ENCODE measurements at regions of chr20 and their contacts with region 1.

Region 1: GRCh38 chr20:50592282-50593004 is 82.3 kb downstream of the PTPN1 start:
- DNase-seq: no peak
- H3K4me3 ChIP-seq: no peak overlapping the region
- H3K27ac ChIP-seq: no peak overlapping the region
- H3K4me1 ChIP-seq: no peaks in the 10 kb centered on the region
- H3K27me3 ChIP-seq: no peaks in the 10 kb centered on the region
- CTCF ChIP-seq: no peak

Region 2: DNA sequence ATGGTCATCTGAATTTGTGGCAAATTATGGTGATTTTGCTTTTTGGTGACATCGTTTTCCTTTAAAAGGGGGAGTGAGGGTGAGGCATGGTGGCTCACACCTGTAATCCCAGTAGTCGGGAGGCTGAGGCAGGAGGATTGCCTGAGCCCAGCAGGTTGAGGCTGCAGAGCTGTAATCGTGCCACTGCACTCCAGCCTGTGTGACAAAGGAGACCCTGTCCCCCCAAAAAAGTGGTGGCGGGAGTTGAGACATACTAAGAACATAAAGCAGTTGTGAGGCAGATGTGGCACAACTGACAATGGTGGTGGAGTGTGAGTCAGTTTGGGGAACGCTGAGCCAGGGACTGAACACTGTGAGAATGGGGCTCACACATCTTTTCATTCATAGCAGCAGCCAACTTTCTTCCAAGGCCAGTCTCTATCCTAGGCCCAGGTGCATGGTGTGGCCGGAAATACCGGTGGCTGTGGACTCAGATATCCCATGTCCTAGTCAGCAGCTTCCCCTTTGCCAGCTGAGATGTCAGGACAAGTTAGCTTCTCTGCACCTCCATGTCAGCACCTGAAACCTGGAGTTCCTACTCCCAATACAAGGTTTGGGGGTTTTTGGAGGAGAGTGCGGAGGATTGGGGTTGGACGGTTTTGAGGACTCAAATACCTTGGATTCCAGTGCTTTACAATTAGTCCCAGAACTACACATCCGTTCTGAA is 293.5 kb after region 1 on chr20:
- CTCF ChIA-PET with region 1: no interaction called
- POLR2A ChIA-PET with region 1: interaction called, 15 read pairs
- intact Hi-C with region 1: no loop called
- DNase-seq: no peak
- H3K4me3 ChIP-seq: no peak overlapping the region
- H3K27ac ChIP-seq: no peak overlapping the region
- H3K4me1 ChIP-seq: no peaks in the 10 kb centered on the region
- H3K27me3 ChIP-seq: no peaks in the 10 kb centered on the region
- CTCF ChIP-seq: no peak